Panc1 (cell line): ENCODE measurements at regions of chr10 and their contacts with region 1.

Region 1: DNA sequence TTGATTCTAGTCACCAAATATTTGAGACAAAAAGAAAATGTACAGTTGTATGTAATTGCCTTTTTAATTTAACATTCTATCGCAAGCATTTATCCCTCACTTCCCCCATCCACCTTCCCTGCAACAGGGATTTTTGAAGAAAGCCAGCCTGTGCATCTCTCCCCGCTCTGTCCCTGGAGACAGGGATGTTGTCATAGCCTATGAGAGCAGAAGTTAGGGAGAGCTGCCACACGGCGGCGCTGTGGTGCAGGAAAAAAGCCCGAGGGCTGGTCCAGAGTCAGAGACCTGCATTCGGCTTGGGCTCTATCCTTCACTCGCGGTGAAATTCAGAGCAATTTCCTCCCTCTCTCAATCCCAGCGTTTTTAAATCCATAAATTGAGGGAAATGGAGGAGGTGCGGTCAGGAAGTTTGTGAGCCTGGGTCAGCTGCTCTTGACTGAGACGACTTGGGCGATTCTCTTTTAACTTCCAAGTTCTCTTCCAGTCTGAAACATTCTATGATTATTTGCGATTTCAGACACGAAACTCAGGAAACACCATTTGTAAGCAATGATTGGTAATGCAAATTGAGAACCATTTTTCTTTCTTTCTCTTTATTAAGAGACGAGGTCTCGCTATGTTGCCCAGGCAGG is 17.5 kb downstream of the HKDC1 start:
- DNase-seq: peak; percentile 61
- ATAC-seq: peak; percentile 98
- H3K4me3 ChIP-seq: no peak overlapping the region
- H3K27ac ChIP-seq: no peak overlapping the region
- H3K4me1 ChIP-seq: 0 out of 2 replicates have a peak, but pooled peaks cover under 1% of the 10 kb centered on the region
- H3K27me3 ChIP-seq: no peaks in the 10 kb centered on the region
- CTCF ChIP-seq: peak; percentile 98

Region 2: GRCh38 chr10:68221196-68221595 is 1016.4 kb before region 1 on chr10:
- CTCF ChIA-PET with region 1: no interaction called
- POLR2A ChIA-PET with region 1: no interaction called
- in situ Hi-C with region 1: no loop called
- intact Hi-C with region 1: no loop called
- DNase-seq: no peak
- ATAC-seq: no peak
- H3K4me3 ChIP-seq: no peak overlapping the region
- H3K27ac ChIP-seq: no peak overlapping the region
- H3K4me1 ChIP-seq: peaks cover 10% of the 10 kb centered on the region; the same call in 1 of the 2 replicates
- H3K27me3 ChIP-seq: no peaks in the 10 kb centered on the region
- CTCF ChIP-seq: no peak

Region 3: GRCh38 chr10:69321030-69321715 is 83.5 kb after region 1 on chr10:
- CTCF ChIA-PET with region 1: interaction called, 12 read pairs
- POLR2A ChIA-PET with region 1: no interaction called
- in situ Hi-C with region 1: no loop called
- intact Hi-C with region 1: loop called (anchors 5 kb)
- DNase-seq: no peak
- ATAC-seq: no peak
- H3K4me3 ChIP-seq: no peak overlapping the region
- H3K27ac ChIP-seq: peak overlapping the region; percentile 2; the same call in 1 of the 2 replicates
- H3K4me1 ChIP-seq: peaks cover 53% of the 10 kb centered on the region
- H3K27me3 ChIP-seq: no peaks in the 10 kb centered on the region
- CTCF ChIP-seq: no peak

Region 4: GRCh38 chr10:69327463-69328379 is 90.1 kb after region 1 on chr10:
- CTCF ChIA-PET with region 1: interaction called, 4 read pairs
- POLR2A ChIA-PET with region 1: no interaction called
- in situ Hi-C with region 1: no loop called
- intact Hi-C with region 1: loop called (anchors 5 kb)
- DNase-seq: no peak
- ATAC-seq: peak; percentile 76
- H3K4me3 ChIP-seq: peak overlapping the region; percentile 28 to 60
- H3K27ac ChIP-seq: peak overlapping the region; percentile 91
- H3K4me1 ChIP-seq: peaks cover 42% of the 10 kb centered on the region
- H3K27me3 ChIP-seq: no peaks in the 10 kb centered on the region
- CTCF ChIP-seq: no peak

Region 5: DNA sequence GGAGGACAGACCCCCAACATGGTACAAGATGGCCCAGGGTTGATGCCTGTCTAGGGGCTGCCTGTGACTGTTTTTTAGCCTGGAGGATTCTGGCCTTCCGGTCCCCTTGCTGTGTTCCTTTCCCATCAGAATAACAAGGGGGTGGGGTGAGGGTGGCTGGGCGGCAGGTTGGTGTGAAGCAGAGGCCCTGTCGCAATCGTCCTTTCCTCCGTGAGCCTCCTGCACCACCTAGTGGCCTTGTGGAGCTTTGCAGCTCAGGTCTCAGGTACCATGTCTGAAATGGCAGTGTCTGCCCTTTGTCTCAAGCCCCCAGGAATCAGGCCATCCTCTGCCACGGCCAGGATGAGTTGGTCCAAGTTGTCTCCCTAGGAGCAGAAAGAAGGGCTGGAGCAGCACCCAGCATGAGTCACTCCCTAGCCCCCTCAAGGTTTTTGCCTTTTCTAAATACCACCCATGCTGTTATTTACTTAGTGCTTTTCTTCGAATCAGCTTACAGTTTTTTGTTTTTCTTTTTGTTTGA is 154.9 kb after region 1 on chr10:
- CTCF ChIA-PET with region 1: interaction called, 5 read pairs
- POLR2A ChIA-PET with region 1: no interaction called
- in situ Hi-C with region 1: no loop called
- intact Hi-C with region 1: loop called (anchors 1 kb)
- DNase-seq: peak; percentile 84
- ATAC-seq: peak; percentile 97
- H3K4me3 ChIP-seq: no peak overlapping the region
- H3K27ac ChIP-seq: no peak overlapping the region
- H3K4me1 ChIP-seq: no peaks in the 10 kb centered on the region
- H3K27me3 ChIP-seq: no peaks in the 10 kb centered on the region
- CTCF ChIP-seq: peak; percentile 99

Region 6: GRCh38 chr10:69464801-69465401 is 227.3 kb after region 1 on chr10:
- CTCF ChIA-PET with region 1: no interaction called
- POLR2A ChIA-PET with region 1: no interaction called
- in situ Hi-C with region 1: no loop called
- intact Hi-C with region 1: no loop called
- DNase-seq: no peak
- ATAC-seq: peak; percentile 51
- H3K4me3 ChIP-seq: no peak overlapping the region
- H3K27ac ChIP-seq: peak overlapping the region; percentile 68
- H3K4me1 ChIP-seq: peaks cover 92% of the 10 kb centered on the region
- H3K27me3 ChIP-seq: no peaks in the 10 kb centered on the region
- CTCF ChIP-seq: no peak

Region 7: GRCh38 chr10:69639291-69640195 is 401.9 kb after region 1 on chr10:
- CTCF ChIA-PET with region 1: no interaction called
- POLR2A ChIA-PET with region 1: no interaction called
- in situ Hi-C with region 1: no loop called
- intact Hi-C with region 1: loop called (anchors 10 kb)
- DNase-seq: peak; percentile 51
- ATAC-seq: peak; percentile 79
- H3K4me3 ChIP-seq: no peak overlapping the region
- H3K27ac ChIP-seq: no peak overlapping the region
- H3K4me1 ChIP-seq: no peaks in the 10 kb centered on the region
- H3K27me3 ChIP-seq: no peaks in the 10 kb centered on the region
- CTCF ChIP-seq: peak; percentile 97